Calu3 (cell line): ENCODE measurements at regions of chr19 and their contacts with region 1.

Region 1: DNA sequence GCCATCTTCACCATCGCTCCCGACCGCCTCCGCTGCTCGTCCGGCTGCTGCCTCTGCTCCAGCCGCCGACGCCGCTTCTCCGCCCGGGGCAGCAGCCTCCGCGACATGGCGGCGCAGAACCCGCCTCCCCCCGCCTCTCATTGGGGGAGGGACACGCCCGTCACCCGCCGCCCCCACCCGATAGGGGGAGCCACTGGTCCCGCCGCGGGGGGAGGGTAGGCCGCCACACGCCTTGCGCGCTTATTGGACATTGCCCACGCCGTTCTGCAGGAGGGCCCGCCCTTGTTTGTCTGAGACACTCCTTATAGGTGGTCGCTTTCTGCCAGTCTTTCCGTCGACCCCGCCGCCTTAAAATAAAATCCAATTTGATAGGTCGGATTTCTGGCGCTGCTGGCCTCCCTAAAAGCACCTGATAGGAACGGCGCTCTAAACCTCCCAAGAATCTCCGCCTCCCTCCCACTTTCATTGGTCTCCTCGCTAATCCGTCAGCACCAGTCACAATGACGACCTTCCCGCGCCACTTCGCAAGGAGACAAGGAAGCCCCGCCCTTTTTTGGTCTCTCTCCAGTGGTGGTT is at the start of gene HNRNPL:
- DNase-seq: peak; percentile 100
- H3K4me3 Mint-ChIP-seq: peak within 1 kb of the TSS; percentile 82
- H3K27ac Mint-ChIP-seq: peak within 1 kb of the TSS; percentile 98
- H3K4me1 Mint-ChIP-seq: peaks cover 36% of the 10 kb centered on the region
- H3K27me3 Mint-ChIP-seq: peaks cover 14% of the 10 kb centered on the region
- CTCF ChIP-seq: peak; percentile 76
- total RNA-seq, gene HNRNPL: 383 and 408 TPM in 2 replicates

Region 2: GRCh38 chr19:38726761-38727301 is 123.1 kb before region 1 on chr19:
- CTCF ChIA-PET with region 1: no interaction called
- intact Hi-C with region 1: no loop called
- DNase-seq: no peak
- H3K4me3 Mint-ChIP-seq: no peak overlapping the region
- H3K27ac Mint-ChIP-seq: peak overlapping the region; percentile 88
- H3K4me1 Mint-ChIP-seq: peaks cover 30% of the 10 kb centered on the region
- H3K27me3 Mint-ChIP-seq: no peaks in the 10 kb centered on the region
- CTCF ChIP-seq: no peak

Region 3: DNA sequence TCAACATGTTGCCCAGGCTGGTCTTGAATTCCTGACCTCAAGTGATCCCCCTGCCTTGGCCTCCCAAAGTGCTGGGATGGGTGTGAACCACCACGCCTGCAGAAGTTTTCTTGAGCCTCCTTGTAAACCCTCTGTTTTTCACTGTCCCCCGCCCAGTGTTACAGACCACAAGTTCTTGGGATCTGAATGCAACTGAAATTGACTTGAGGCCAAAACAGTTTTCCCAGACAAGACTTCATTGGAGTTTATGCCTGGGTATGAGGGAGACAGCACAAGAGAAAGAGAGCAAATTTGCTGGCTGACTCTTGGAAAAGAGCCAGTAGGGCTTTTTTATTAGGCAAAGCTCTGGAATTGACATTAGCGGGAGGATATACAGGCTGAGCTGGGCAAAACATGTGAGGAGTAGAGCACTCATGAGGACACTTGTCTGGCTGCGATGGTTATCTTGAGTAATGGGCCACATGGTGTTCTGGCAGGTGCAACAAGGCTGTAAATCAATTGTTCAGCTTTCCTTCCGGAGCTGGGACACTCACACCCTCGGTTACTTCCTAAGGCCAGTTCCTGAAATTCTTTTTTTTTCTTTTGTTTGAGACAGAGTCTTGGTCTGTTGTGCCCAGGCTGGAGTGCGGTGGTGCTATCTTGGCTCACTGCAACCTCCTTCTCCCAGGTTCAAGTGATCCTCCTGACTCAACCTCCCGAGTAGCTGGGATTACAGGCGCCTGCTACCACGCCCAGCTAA is 12.5 kb after region 1 on chr19:
- CTCF ChIA-PET with region 1: interaction called, 19 read pairs
- intact Hi-C with region 1: no loop called
- DNase-seq: no peak
- H3K4me3 Mint-ChIP-seq: no peak overlapping the region
- H3K27ac Mint-ChIP-seq: peak overlapping the region; percentile 12
- H3K4me1 Mint-ChIP-seq: peaks cover 37% of the 10 kb centered on the region
- H3K27me3 Mint-ChIP-seq: no peaks in the 10 kb centered on the region
- CTCF ChIP-seq: no peak

Region 4: DNA sequence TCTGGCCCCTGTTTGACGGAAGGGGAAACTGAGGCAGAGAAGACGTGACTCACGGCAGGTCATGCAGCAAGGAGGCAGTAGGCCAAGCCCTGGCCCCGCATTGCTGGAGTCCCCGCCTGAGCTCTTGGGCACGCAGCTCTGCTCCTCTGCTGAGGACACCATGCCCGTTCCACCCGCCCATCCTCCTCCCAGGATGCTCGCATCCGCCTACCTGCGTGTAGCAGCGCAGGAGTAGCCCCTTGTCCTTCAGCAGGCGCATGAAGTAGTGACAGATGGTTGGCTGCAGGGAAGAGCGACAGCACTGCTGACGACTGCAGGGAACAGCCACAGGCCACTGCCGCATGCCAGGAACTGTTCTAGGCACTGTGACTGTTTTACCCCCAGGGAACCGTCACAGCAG is 38.9 kb after region 1 on chr19:
- CTCF ChIA-PET with region 1: interaction called, 7 read pairs
- intact Hi-C with region 1: loop called (anchors 5 kb)
- DNase-seq: no peak
- H3K4me3 Mint-ChIP-seq: no peak overlapping the region
- H3K27ac Mint-ChIP-seq: no peak overlapping the region
- H3K4me1 Mint-ChIP-seq: no peaks in the 10 kb centered on the region
- H3K27me3 Mint-ChIP-seq: no peaks in the 10 kb centered on the region
- CTCF ChIP-seq: no peak

Region 5: GRCh38 chr19:38912600-38913514 is 62.9 kb after region 1 on chr19:
- CTCF ChIA-PET with region 1: no interaction called
- intact Hi-C with region 1: no loop called
- DNase-seq: no peak
- H3K4me3 Mint-ChIP-seq: no peak overlapping the region
- H3K27ac Mint-ChIP-seq: no peak overlapping the region
- H3K4me1 Mint-ChIP-seq: no peaks in the 10 kb centered on the region
- H3K27me3 Mint-ChIP-seq: no peaks in the 10 kb centered on the region
- CTCF ChIP-seq: no peak

Region 6: DNA sequence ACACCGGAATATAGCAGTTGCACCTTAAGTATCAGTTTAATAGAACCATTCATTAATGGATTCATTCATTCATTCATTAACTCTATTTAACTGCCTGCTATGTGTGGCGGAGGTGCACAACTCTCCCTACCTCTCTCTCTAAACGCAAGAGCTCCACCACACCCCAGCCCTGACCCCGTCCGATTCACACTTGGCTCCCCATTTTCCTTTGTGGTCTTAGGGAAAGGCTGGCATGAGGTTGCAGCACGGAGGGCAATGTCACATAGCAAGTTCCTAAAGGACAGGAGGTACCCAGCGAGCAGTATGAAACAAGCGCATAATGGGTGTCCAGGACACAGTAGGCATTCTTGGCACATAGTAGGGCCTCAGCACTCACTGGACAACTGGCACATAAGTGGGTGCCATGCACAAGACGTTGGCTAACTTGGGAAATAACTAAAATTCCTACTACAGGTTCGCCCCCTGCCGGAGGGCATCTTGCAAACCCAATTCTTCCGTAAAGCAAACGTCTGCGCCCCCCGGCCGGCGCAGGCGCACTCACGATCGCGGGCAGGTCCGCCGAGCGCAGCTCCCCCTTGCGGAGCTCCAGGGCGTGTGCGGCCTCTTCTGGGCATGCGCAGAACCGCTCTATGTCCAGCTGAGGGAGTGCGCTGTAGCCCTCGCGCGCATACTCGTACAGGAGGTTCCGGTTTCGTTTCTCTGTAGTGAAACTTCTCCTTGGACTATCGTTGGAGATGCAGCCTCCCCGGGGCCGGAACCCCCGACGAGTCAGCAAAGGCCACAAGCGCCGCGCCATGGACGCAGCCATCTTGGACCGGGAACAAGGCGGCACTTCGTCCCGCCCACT is 80.2 kb after region 1 on chr19 and contains the start of gene SARS2:
- CTCF ChIA-PET with region 1: interaction called, 8 read pairs
- intact Hi-C with region 1: loop called (anchors 1 kb)
- DNase-seq: peak; percentile 97
- H3K4me3 Mint-ChIP-seq: peak within 1 kb of the TSS; percentile 98
- H3K27ac Mint-ChIP-seq: peak within 1 kb of the TSS; percentile 93
- H3K4me1 Mint-ChIP-seq: peaks cover 23% of the 10 kb centered on the region
- H3K27me3 Mint-ChIP-seq: no peaks in the 10 kb centered on the region
- CTCF ChIP-seq: peak; percentile 99
- total RNA-seq, gene SARS2: 52.1 and 58.1 TPM in 2 replicates

Region 7: DNA sequence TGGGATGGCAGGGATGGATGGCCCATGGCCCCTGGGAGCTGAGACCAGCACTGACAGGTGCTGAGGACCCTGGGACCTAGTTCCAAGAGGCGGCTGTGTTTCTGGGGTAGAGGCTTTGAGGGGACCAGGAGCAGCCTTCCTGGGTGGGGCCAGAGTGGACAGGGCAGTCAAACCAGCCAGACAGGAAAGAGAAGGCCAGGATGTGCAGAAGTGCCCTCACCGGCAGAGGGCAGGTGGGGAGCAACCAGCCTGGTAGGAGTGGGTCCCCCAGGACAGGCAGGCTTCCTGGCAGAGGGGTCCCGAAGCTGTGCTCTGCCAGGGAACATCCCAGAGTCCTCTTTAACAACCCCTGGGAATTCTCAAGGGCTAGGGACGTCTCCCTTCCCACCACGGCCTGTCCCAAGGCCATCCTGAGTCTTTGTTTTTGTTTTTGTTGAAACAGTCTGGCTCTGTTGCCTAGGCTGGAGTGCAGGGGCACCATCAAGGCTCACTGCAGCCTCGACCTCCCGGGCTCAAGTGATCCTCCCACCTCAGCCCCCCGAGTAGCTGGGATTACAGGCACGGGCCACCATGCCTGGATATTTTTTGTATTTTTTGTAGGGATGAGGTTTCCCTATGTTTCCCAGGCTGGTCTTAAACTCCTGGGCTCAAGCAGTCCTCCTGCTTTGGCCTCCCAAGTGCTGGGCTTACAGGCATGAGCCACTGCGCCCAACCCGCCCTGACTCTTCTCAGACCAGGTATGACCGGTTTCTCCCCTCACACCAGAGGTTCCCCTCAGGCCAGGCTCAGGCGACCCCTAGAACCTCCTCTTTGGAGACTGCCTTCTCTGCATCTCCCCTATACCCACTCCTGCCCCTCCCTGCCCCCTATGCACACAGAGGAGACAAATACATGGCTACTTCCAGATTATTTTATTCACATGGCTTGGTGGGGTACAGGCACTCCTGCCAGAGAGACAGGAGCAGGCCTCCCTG is 1543.2 kb after region 1 on chr19:
- CTCF ChIA-PET with region 1: no interaction called
- intact Hi-C with region 1: no loop called
- DNase-seq: peak; percentile 94
- H3K4me3 Mint-ChIP-seq: peak overlapping the region; percentile 13
- H3K27ac Mint-ChIP-seq: peak overlapping the region; percentile 68
- H3K4me1 Mint-ChIP-seq: peaks cover 27% of the 10 kb centered on the region
- H3K27me3 Mint-ChIP-seq: no peaks in the 10 kb centered on the region
- CTCF ChIP-seq: peak; percentile 92